ENCODE measurements at regions of chr3 and their contacts with region 1.

Region 1: DNA sequence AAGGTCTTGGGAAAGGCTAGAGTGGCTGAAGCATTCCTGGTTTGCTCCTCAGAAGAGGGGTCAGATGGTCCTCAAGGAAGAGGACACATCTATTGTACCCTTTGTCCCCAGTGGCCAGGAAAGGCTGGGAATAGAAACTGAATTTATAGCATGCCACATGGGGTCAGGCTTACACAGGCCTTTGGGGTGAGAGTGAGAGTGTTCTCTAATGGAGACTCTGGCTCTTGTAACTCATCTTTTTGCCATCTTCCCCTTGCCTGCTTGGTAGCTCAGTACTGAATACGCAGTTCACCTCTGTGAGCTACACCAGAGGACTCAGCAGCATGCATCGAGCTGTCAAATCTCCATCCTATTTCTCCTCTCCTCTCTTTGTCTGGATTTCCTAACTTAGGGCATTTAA is 87.5 kb downstream of the ATP2B2 start:
- DNase-seq: peak in 1 of 2 experiments; percentile 28
- H3K4me3 ChIP-seq: no peak overlapping the region
- H3K4me3 Mint-ChIP-seq: no peak overlapping the region
- H3K27ac Mint-ChIP-seq: no peak overlapping the region
- H3K4me1 ChIP-seq: no peaks in the 10 kb centered on the region
- H3K4me1 Mint-ChIP-seq: no peaks in the 10 kb centered on the region
- H3K27me3 ChIP-seq: no peaks in the 10 kb centered on the region
- H3K27me3 Mint-ChIP-seq: peaks cover 10% of the 10 kb centered on the region
- CTCF ChIP-seq: peak in 1 of 2 experiments; percentile 32

Region 2: GRCh38 chr3:10160346-10160745 is 257.5 kb before region 1 on chr3:
- CTCF ChIA-PET with region 1: no interaction called
- POLR2A ChIA-PET with region 1: no interaction called
- intact Hi-C with region 1: no loop called
- DNase-seq: no peak
- H3K4me3 ChIP-seq: no peak overlapping the region
- H3K4me3 Mint-ChIP-seq: no peak overlapping the region
- H3K27ac Mint-ChIP-seq: no peak overlapping the region
- H3K4me1 ChIP-seq: 0 out of 2 replicates have a peak, but pooled peaks cover 4% of the 10 kb centered on the region
- H3K4me1 Mint-ChIP-seq: no peaks in the 10 kb centered on the region
- H3K27me3 ChIP-seq: no peaks in the 10 kb centered on the region
- H3K27me3 Mint-ChIP-seq: no peaks in the 10 kb centered on the region
- CTCF ChIP-seq: no peak

Region 3: GRCh38 chr3:10495002-10495401 is 77.2 kb after region 1 on chr3:
- CTCF ChIA-PET with region 1: no interaction called
- POLR2A ChIA-PET with region 1: no interaction called
- intact Hi-C with region 1: no loop called
- DNase-seq: peak; percentile 25 to 45
- H3K4me3 ChIP-seq: no peak overlapping the region
- H3K4me3 Mint-ChIP-seq: no peak overlapping the region
- H3K27ac Mint-ChIP-seq: no peak overlapping the region
- H3K4me1 ChIP-seq: no peaks in the 10 kb centered on the region
- H3K4me1 Mint-ChIP-seq: no peaks in the 10 kb centered on the region
- H3K27me3 ChIP-seq: no peaks in the 10 kb centered on the region
- H3K27me3 Mint-ChIP-seq: peaks cover 18% of the 10 kb centered on the region
- CTCF ChIP-seq: no peak

Region 4: GRCh38 chr3:10693460-10693859 is 275.6 kb after region 1 on chr3:
- CTCF ChIA-PET with region 1: no interaction called
- POLR2A ChIA-PET with region 1: no interaction called
- intact Hi-C with region 1: loop called (anchors 5 kb)
- DNase-seq: no peak
- H3K4me3 ChIP-seq: no peak overlapping the region
- H3K4me3 Mint-ChIP-seq: no peak overlapping the region
- H3K27ac Mint-ChIP-seq: no peak overlapping the region
- H3K4me1 ChIP-seq: no peaks in the 10 kb centered on the region
- H3K4me1 Mint-ChIP-seq: no peaks in the 10 kb centered on the region
- H3K27me3 ChIP-seq: no peaks in the 10 kb centered on the region
- H3K27me3 Mint-ChIP-seq: peaks cover 17% of the 10 kb centered on the region
- CTCF ChIP-seq: no peak

Region 5: GRCh38 chr3:10738688-10739372 is 321.0 kb after region 1 on chr3:
- CTCF ChIA-PET with region 1: interaction called, 6 read pairs
- POLR2A ChIA-PET with region 1: no interaction called
- intact Hi-C with region 1: loop called (anchors 2 kb)
- DNase-seq: peak; percentile 61 to 74
- H3K4me3 ChIP-seq: no peak overlapping the region
- H3K4me3 Mint-ChIP-seq: no peak overlapping the region
- H3K27ac Mint-ChIP-seq: no peak overlapping the region
- H3K4me1 ChIP-seq: no peaks in the 10 kb centered on the region
- H3K4me1 Mint-ChIP-seq: no peaks in the 10 kb centered on the region
- H3K27me3 ChIP-seq: no peaks in the 10 kb centered on the region
- H3K27me3 Mint-ChIP-seq: peaks cover 21% of the 10 kb centered on the region
- CTCF ChIP-seq: peak; percentile 78 to 81

Measured in Caco-2 (cell line).